Heart left ventricle (tissue), 16 donors: ENCODE measurements at regions of chr2 and their contacts with region 1.

Region 1: GRCh38 chr2:196750982-196751635 is 48.4 kb downstream of the GTF3C3 start:
- DNase-seq: peak in 4 of 5 donors; percentile 33 to 41 (median 37)
- ATAC-seq: peak in 3 of 4 donors; percentile 56 to 80 (median 71)
- H3K4me3 ChIP-seq: no peak overlapping the region
- H3K27ac ChIP-seq: no peak overlapping the region
- H3K4me1 ChIP-seq: peaks cover 0 to 3% (median 0%) of the 10 kb centered on the region in 12 donors
- H3K27me3 ChIP-seq: no peaks in the 10 kb centered on the region
- CTCF ChIP-seq: peak; percentile 59 to 89 (median 72)
- POLR2A ChIP-seq: no peak

Region 2: GRCh38 chr2:196337208-196337953 is 413.7 kb before region 1 on chr2:
- intact Hi-C with region 1: no loop called
- DNase-seq: no peak
- ATAC-seq: peak in 1 of 4 donors; percentile 42
- H3K4me3 ChIP-seq: no peak overlapping the region
- H3K27ac ChIP-seq: no peak overlapping the region
- H3K4me1 ChIP-seq: peaks cover 0 to 50% (median 9%) of the 10 kb centered on the region in 12 donors
- H3K27me3 ChIP-seq: no peaks in the 10 kb centered on the region
- CTCF ChIP-seq: peak; percentile 17 to 62 (median 46)
- POLR2A ChIP-seq: no peak

Region 3: DNA sequence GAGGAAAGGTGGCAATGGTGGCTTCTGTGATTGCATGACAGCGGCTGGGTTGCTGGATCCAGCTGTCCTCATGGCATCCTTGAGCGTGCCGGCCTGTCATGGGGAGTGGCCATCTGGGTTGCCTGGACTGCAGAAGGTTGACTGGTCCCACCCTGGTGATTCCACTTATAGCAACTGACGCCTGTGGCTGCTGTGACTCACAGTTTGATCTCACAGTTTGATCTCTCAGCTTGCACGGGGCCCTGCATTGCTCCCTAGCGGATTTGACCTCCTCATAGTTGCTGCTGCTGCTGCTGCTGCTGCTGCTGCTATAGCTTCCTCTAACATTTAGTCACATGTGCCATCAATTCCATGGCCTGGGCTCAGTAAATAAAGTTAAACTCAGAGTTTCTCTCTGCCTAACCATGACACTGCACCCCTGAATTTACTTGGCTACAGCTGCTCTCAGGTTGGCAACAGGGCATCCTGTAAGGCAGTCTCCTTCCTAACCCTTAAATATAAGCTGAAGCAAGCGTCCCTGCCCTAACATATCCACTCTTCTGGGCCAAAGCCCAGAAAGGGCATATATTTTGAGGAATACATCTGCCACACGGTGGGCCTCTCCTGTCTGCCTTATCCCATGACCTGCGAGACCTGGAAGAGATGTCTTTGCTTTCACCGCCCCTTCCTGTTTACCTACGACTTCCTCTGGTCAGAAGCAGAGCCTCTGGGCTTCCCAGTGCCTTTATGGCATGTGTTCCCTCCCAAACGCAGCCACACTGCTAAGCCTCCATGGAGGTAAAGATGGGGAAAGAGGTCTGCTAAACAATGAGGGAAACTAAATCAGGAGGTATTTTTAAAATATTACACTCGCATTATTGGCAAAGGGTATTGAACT is 149.4 kb before region 1 on chr2:
- intact Hi-C with region 1: loop called in 2 of 10 experiments (anchors 10 kb)
- DNase-seq: peak; percentile 71 to 90 (median 76)
- ATAC-seq: peak; percentile 97 to 100 (median 98)
- H3K4me3 ChIP-seq: no peak overlapping the region
- H3K27ac ChIP-seq: peak overlapping the region in 10 of 12 donors; percentile 9 to 82 (median 60)
- H3K4me1 ChIP-seq: peaks cover 0 to 12% (median under 1%) of the 10 kb centered on the region in 12 donors
- H3K27me3 ChIP-seq: no peaks in the 10 kb centered on the region
- CTCF ChIP-seq: no peak
- POLR2A ChIP-seq: no peak

Region 4: GRCh38 chr2:197130318-197130717 is 379.2 kb after region 1 on chr2:
- intact Hi-C with region 1: no loop called
- DNase-seq: no peak
- ATAC-seq: no peak
- H3K4me3 ChIP-seq: no peak overlapping the region
- H3K27ac ChIP-seq: peak overlapping the region in 1 of 12 donors; percentile 28
- H3K4me1 ChIP-seq: peaks cover 0 to 19% (median 2%) of the 10 kb centered on the region in 12 donors
- H3K27me3 ChIP-seq: no peaks in the 10 kb centered on the region
- CTCF ChIP-seq: no peak
- POLR2A ChIP-seq: no peak